Posterior vena cava (tissue), 2 donors: ENCODE measurements at regions of chr9 and their contacts with region 1.

Region 1: DNA sequence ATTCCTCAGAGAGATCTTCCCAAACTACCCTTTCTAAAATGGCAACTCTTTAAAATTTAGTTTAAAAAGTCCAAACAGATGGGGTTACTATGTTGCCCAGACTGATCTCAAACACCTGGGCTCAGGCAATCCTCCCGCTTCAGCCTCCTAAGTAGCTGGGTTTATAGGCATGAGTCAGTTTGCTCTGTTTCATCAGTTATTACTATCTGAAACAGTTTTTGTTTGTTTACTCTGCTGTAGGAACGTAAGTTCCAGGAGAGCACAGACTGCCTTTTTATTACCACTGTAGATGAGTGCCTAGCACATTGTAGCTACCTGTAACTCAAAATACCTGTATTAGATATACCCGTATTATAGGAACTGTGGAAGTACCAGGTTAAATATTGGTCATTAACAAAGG is 89.4 kb downstream of the UHRF2 start:
- DNase-seq: no peak

Region 2: GRCh38 chr9:6353851-6354686 is 148.3 kb before region 1 on chr9:
- intact Hi-C with region 1: no loop called
- DNase-seq: no peak

Region 3: DNA sequence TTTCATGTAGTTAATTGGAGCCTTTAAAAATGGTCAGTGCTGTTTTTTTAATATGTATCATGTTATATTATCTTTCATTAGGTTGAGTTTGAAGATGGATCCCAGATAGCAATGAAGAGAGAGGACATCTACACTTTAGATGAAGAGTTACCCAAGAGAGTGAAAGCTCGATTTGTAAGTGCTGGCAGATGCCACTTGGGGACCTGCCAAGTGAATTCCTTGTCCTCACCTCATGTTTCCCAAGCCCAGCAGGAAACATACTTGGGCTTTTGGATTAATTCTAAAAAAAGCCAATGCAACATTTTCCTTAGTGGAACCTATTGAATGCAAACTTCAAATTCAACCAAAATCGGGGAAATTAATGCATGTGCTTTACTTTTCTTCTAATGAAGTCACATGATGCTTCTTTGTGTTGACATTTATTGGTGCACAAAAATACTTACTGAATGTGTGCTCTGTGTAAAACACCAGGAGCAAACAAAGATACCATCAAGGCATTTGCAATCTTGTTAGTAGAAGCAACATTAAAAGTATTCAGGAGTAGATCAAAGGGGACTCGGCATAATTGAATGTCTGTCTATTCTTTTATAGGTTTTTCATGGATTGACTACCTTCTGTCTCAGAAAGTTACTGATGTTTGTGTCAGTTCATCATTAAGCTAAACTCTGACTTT is 667.5 kb after region 1 on chr9:
- intact Hi-C with region 1: loop called in 1 of 2 experiments (anchors 5 kb)
- DNase-seq: no peak